SK-N-SH (cell line): ENCODE measurements at regions of chr15 and their contacts with region 1.

Region 1: GRCh38 chr15:51536965-51537574 is 85.5 kb downstream of the DMXL2 start:
- DNase-seq: peak; percentile 9
- H3K4me3 ChIP-seq: no peak overlapping the region
- H3K27ac ChIP-seq: no peak overlapping the region
- H3K4me1 ChIP-seq: no peaks in the 10 kb centered on the region
- H3K27me3 ChIP-seq: no peaks in the 10 kb centered on the region
- CTCF ChIP-seq: peak; percentile 71
- EP300 ChIP-seq: no peak
- RAD21 ChIP-seq: peak; percentile 46

Region 2: DNA sequence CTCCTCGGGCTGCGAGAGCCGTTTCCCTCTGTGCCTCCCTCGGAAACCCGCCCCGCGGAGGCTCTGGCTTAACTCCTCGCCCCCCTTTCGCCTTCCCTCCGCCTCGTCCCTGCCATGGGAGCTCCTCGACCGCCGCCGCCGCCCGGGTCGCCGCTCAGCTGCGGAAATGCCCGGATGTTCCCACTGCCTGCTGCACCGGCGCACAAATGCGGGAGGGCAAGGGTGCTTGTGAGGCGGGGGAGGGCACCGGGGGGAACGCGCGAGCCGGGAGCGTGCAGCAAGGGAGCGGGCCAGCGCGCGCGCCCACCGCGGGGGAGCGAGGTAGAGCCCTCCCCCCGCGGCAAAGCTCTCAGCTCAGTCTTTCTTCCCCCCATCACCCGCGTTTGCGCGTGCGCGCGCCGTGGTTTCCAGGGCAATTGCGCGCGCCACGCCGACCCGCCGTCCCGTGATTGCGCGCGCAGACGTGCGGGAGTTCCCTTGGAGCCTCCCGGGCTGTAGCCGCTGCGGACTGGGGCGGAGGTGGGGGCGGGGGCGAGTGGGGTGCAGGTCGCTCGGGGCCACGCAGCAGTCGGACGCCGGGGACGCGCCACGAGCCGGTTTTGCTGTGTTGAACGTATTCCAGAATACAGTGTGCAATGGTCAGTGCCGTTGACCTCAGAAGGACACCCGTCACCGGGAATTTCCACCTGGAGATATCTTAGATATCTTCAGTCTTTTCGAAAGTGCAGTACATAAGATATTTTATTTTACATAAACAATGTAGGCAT is 85.7 kb after region 1 on chr15 and contains the start of gene DMXL2:
- CTCF ChIA-PET with region 1: interaction called, 18 read pairs
- POLR2A ChIA-PET with region 1: interaction called, 3 read pairs
- DNase-seq: peak; percentile 95
- H3K4me3 ChIP-seq: peak within 1 kb of the TSS; percentile 85 to 96
- H3K27ac ChIP-seq: peak within 1 kb of the TSS; percentile 64 to 90
- H3K4me1 ChIP-seq: peaks cover 11 to 12% of the 10 kb centered on the region in 2 experiments; a peak in 3 of 4 replicates
- H3K27me3 ChIP-seq: no peaks in the 10 kb centered on the region
- CTCF ChIP-seq: no peak
- EP300 ChIP-seq: peak in 1 of 2 experiments; percentile 35; a peak in 1 of 4 replicates
- RAD21 ChIP-seq: no peak
- polyA plus RNA-seq, gene DMXL2: 6.4 and 8.9 TPM in 2 replicates